A549 (cell line): ENCODE measurements at regions of chr1 and their contacts with region 1.

Region 1: DNA sequence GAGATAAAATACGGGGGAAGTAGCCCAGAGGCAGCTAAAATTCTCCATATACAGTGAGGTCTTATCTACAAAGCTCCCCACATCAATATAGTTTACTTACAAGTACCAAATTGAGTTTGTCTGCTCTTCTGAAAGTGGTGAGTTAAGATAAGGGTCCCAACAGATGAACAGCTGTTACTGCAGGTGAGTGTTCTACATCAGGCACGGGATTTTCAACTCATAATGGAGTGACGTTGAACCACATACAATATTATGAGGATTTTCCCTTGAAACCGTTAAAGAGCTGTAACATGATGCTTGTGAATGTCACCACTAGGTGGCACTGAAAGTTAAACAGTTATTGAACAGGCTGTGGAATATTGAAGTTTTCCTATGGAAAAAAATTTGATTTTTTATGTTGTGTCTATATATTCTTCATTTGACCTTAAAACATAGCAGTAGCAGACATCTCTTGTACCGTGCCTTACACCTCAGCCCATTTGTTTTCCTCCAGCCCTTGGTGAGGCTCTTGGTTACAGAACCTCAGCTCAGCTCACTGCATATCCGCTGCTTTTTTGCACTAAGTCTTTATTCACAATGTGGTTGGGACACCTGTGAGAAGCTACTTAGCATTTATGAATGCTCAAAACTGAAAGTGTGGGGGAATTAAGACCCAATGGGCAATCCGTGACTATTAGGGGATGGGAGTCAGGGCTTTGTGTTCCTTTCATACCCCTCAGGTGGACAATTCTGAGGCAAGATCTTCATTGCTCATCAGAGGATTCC is 23.2 kb downstream of the CD1D start:
- DNase-seq: peak; percentile 41 to 68
- ATAC-seq: peak; percentile 97 to 99
- H3K4me3 ChIP-seq: no peak overlapping the region
- H3K27ac ChIP-seq: no peak overlapping the region
- H3K4me1 ChIP-seq: no peaks in the 10 kb centered on the region
- CTCF ChIP-seq: peak; percentile 78
- EP300 ChIP-seq: no peak
- POLR2A ChIP-seq: no peak
- RAD21 ChIP-seq: peak; percentile 70 to 75

Region 2: GRCh38 chr1:158185770-158186705 is 17.8 kb before region 1 on chr1:
- CTCF ChIA-PET with region 1: interaction called, 27 read pairs
- POLR2A ChIA-PET with region 1: no interaction called
- DNase-seq: no peak
- ATAC-seq: no peak
- H3K4me3 ChIP-seq: no peak overlapping the region
- H3K27ac ChIP-seq: no peak overlapping the region
- H3K4me1 ChIP-seq: no peaks in the 10 kb centered on the region
- CTCF ChIP-seq: no peak
- EP300 ChIP-seq: no peak
- POLR2A ChIP-seq: no peak
- RAD21 ChIP-seq: no peak

Region 3: GRCh38 chr1:158527190-158527815 is 323.4 kb after region 1 on chr1:
- CTCF ChIA-PET with region 1: interaction called, 11 read pairs
- POLR2A ChIA-PET with region 1: no interaction called
- DNase-seq: peak; percentile 2 to 63
- ATAC-seq: peak; percentile 50 to 73; a peak in 4 of 6 replicates
- H3K4me3 ChIP-seq: no peak overlapping the region
- H3K27ac ChIP-seq: no peak overlapping the region
- H3K4me1 ChIP-seq: no peaks in the 10 kb centered on the region
- CTCF ChIP-seq: peak; percentile 47
- EP300 ChIP-seq: no peak
- POLR2A ChIP-seq: no peak
- RAD21 ChIP-seq: peak; percentile 42 to 45; a peak in 4 of 5 replicates

Region 4: DNA sequence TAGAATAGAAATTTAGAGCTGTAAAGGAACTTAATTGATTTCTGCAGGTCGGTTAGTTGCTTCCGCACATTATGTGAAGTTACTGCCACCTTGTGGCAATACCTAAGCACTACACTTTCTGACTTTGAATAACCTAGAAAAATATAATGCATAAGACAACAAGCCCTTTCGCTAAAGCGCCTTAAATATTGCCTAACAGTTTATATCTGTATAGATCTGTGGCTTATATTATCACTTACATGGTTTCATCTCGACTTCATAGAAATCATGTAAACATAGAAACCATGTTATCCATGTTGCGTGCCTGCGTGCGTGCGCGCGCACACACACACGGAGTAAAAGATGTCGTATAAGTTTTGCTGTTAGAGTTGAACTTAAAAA is 794.9 kb after region 1 on chr1:
- CTCF ChIA-PET with region 1: interaction called, 15 read pairs
- POLR2A ChIA-PET with region 1: no interaction called
- DNase-seq: peak; percentile 31 to 58
- ATAC-seq: peak; percentile 43 to 73; a peak in 4 of 6 replicates
- H3K4me3 ChIP-seq: no peak overlapping the region
- H3K27ac ChIP-seq: no peak overlapping the region
- H3K4me1 ChIP-seq: no peaks in the 10 kb centered on the region
- CTCF ChIP-seq: peak; percentile 82
- EP300 ChIP-seq: no peak
- POLR2A ChIP-seq: no peak
- RAD21 ChIP-seq: peak; percentile 80

Region 5: DNA sequence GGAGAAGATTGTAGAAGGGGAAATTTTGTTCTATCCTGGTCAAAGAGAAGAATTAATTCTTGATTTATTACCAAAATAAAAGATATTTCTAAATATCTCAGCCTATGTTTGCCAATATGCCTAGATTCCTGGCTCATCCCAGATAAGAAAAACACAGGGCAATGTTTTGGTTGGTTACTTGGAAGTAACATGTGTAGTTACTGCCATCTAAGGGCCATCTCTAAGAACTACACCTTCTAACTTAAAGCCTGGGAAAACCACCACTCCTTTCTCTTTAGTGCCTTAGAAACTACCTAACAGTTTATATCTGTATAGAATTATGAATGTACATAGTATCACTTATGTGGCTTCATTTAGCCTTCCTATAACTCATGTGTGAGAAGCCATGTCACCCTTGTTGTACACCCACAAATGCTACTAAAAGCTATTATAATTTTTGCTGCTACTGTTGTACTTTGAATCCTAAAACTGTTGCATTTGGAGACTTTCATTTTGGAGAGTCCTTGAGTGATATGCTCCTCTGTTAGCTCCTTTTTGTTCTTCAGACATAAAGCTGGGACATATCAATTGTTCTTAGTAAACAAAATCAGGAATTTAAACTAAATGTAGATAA is 868.2 kb after region 1 on chr1:
- CTCF ChIA-PET with region 1: interaction called, 24 read pairs
- POLR2A ChIA-PET with region 1: no interaction called
- DNase-seq: peak; percentile 40 to 69
- ATAC-seq: peak; percentile 84 to 86
- H3K4me3 ChIP-seq: no peak overlapping the region
- H3K27ac ChIP-seq: no peak overlapping the region
- H3K4me1 ChIP-seq: no peaks in the 10 kb centered on the region
- CTCF ChIP-seq: peak; percentile 65
- EP300 ChIP-seq: no peak
- POLR2A ChIP-seq: no peak
- RAD21 ChIP-seq: peak; percentile 65 to 75